ENCODE measurements at regions of chr10 and their contacts with region 1.

Region 1: GRCh38 chr10:72692057-72692910 is at the start of gene MCU:
- DNase-seq: peak; percentile 41
- H3K4me3 Mint-ChIP-seq: peak within 1 kb of the TSS; percentile 80
- H3K27ac Mint-ChIP-seq: peak within 1 kb of the TSS; percentile 17
- H3K4me1 Mint-ChIP-seq: peaks cover 45% of the 10 kb centered on the region
- H3K27me3 Mint-ChIP-seq: no peaks in the 10 kb centered on the region
- CTCF ChIP-seq: no peak
- total RNA-seq, gene MCU: 14.0 and 19.2 TPM in 2 replicates

Region 2: DNA sequence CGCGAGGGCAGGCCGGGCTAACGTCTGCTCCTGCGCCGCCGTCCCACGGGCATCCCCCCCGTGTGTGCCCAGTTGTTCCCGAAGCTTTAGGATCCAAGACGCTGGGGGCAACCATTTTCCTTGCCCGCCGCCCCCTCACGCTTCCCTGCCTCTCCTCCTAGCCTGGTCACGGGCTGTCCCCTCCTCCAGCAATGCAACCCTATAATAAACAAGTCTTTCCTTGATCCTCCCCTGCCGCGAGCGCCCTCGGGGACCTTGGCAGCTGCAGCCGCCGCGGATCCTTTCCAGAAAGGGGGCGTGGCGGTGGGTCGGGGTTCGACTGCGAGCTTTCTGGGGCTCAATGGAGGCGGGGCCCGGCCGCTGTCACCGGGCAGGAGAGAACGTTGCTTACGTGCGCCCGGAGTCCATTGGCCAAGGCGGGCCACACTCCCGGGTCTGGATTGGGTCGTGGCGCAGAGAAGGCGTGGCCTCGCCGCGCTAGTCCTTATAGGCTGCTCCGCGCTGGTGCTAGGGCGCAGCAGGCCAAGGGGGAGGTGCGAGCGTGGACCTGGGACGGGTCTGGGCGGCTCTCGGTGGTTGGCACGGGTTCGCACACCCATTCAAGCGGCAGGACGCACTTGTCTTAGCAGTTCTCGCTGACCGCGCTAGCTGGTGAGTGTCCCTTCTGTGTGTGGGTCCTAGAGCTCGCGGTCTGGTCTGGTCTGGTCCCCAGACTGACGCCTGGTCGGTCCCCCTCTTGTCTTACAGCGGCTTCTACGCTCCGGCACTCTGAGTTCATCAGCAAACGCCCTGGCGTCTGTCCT is 418.7 kb before region 1 on chr10 and contains the start of gene DDIT4:
- CTCF ChIA-PET with region 1: no interaction called
- POLR2A ChIA-PET with region 1: no interaction called
- intact Hi-C with region 1: no loop called
- DNase-seq: peak; percentile 99
- H3K4me3 Mint-ChIP-seq: peak within 1 kb of the TSS; percentile 81
- H3K27ac Mint-ChIP-seq: peak within 1 kb of the TSS; percentile 92
- H3K4me1 Mint-ChIP-seq: peaks cover 38% of the 10 kb centered on the region
- H3K27me3 Mint-ChIP-seq: no peaks in the 10 kb centered on the region
- CTCF ChIP-seq: no peak
- total RNA-seq, gene DDIT4: 698 and 872 TPM in 2 replicates

Region 3: GRCh38 chr10:72567884-72568640 is 124.2 kb before region 1 on chr10:
- CTCF ChIA-PET with region 1: interaction called, 5 read pairs
- POLR2A ChIA-PET with region 1: no interaction called
- intact Hi-C with region 1: loop called (anchors 5 kb)
- DNase-seq: peak; percentile 48
- H3K4me3 Mint-ChIP-seq: no peak overlapping the region
- H3K27ac Mint-ChIP-seq: no peak overlapping the region
- H3K4me1 Mint-ChIP-seq: peaks cover 6% of the 10 kb centered on the region
- H3K27me3 Mint-ChIP-seq: no peaks in the 10 kb centered on the region
- CTCF ChIP-seq: peak; percentile 9

Region 4: GRCh38 chr10:72679838-72680241 is 12.4 kb before region 1 on chr10:
- CTCF ChIA-PET with region 1: interaction called, 4 read pairs
- POLR2A ChIA-PET with region 1: interaction called, 24 read pairs
- intact Hi-C with region 1: no loop called
- DNase-seq: no peak
- H3K4me3 Mint-ChIP-seq: no peak overlapping the region
- H3K27ac Mint-ChIP-seq: no peak overlapping the region
- H3K4me1 Mint-ChIP-seq: peaks cover 7% of the 10 kb centered on the region
- H3K27me3 Mint-ChIP-seq: no peaks in the 10 kb centered on the region
- CTCF ChIP-seq: no peak

Region 5: GRCh38 chr10:72834183-72834825 is 142.0 kb after region 1 on chr10:
- CTCF ChIA-PET with region 1: interaction called, 95 read pairs
- POLR2A ChIA-PET with region 1: interaction called, 70 read pairs
- intact Hi-C with region 1: loop called (anchors 1 kb)
- DNase-seq: peak; percentile 75
- H3K4me3 Mint-ChIP-seq: no peak overlapping the region
- H3K27ac Mint-ChIP-seq: no peak overlapping the region
- H3K4me1 Mint-ChIP-seq: peaks cover 8% of the 10 kb centered on the region
- H3K27me3 Mint-ChIP-seq: no peaks in the 10 kb centered on the region
- CTCF ChIP-seq: peak; percentile 70